Common myeloid progenitor, CD34-positive (primary cell): ENCODE measurements at regions of chr6 and their contacts with region 1.

Region 1: GRCh38 chr6:158819213-158819909 is at the start of gene EZR:
- DNase-seq: peak; percentile 87 to 90 (median 89)
- H3K4me3 ChIP-seq: peak within 1 kb of the TSS; percentile 62 to 92 (median 82)
- H3K27ac ChIP-seq: peak within 1 kb of the TSS; percentile 84 to 88
- H3K4me1 ChIP-seq: peaks cover 10 to 30% (median 22%) of the 10 kb centered on the region in 4 experiments
- H3K27me3 ChIP-seq: no peaks in the 10 kb centered on the region

Region 2: GRCh38 chr6:158793432-158793831 is 25.9 kb before region 1 on chr6:
- CTCF ChIA-PET with region 1: interaction called, 19 read pairs
- POLR2A ChIA-PET with region 1: no interaction called
- DNase-seq: peak; percentile 50 to 72 (median 70)
- H3K4me3 ChIP-seq: no peak overlapping the region
- H3K27ac ChIP-seq: no peak overlapping the region
- H3K4me1 ChIP-seq: peaks cover 8 to 17% (median 12%) of the 10 kb centered on the region in 4 experiments
- H3K27me3 ChIP-seq: no peaks in the 10 kb centered on the region

Region 3: GRCh38 chr6:158869826-158870648 is 50.7 kb after region 1 on chr6:
- CTCF ChIA-PET with region 1: interaction called, 7 read pairs
- POLR2A ChIA-PET with region 1: interaction called, 14 read pairs
- DNase-seq: peak; percentile 98 to 99 (median 99)
- H3K4me3 ChIP-seq: peak overlapping the region in 6 of 7 experiments; percentile 31 to 80 (median 54)
- H3K27ac ChIP-seq: peak overlapping the region; percentile 69 to 92
- H3K4me1 ChIP-seq: peaks cover 5 to 16% (median 13%) of the 10 kb centered on the region in 4 experiments
- H3K27me3 ChIP-seq: peaks cover 0 to 2% (median 0%) of the 10 kb centered on the region in 5 experiments